Activated CD4-positive, alpha-beta memory T cell treated with anti-CD3 and anti-CD28 coated beads for 36 hours (primary cell): ENCODE measurements at regions of chr2 and their contacts with region 1.

Region 1: DNA sequence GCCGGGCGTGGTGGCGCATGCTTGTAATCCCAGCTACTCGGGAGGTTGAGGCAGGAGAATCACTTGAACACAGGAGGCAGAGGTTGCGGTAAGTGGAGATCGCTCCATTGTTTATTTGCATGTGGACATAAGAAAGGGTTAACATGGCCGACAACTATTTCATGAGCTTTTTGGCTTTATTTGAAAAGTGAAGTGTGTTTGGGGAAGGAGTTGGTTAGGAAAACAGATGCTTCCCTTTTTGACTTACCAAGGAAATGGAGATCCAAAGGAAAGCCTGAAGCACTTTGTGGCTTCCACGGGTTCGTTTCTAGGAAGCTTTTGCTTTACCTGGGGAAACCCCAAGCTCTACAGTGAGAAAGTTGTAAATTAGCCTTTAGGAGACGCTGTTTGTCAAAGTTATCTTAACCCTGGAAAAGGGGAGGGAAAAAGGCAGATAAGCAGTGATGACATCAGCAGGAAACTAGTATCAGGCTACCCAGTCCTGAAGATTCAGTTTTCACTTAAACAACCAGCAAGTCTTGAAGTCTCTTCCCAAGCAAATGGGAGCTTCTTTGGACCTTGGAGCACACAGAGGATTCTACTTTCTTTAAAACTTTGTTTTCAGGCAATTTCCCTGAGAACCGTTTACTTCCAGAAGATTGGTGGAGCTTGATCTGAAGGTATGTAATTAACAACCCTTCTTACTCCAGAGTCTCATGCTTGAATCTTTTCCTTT is at the start of gene CASP10:
- DNase-seq: no peak
- H3K4me3 Mint-ChIP-seq: peak within 1 kb of the TSS; percentile 85
- H3K27ac Mint-ChIP-seq: peak within 1 kb of the TSS; percentile 90
- H3K4me1 Mint-ChIP-seq: peaks cover 58% of the 10 kb centered on the region
- H3K27me3 Mint-ChIP-seq: no peaks in the 10 kb centered on the region
- total RNA-seq, gene CASP10: 15.9 to 16.7 TPM

Region 2: DNA sequence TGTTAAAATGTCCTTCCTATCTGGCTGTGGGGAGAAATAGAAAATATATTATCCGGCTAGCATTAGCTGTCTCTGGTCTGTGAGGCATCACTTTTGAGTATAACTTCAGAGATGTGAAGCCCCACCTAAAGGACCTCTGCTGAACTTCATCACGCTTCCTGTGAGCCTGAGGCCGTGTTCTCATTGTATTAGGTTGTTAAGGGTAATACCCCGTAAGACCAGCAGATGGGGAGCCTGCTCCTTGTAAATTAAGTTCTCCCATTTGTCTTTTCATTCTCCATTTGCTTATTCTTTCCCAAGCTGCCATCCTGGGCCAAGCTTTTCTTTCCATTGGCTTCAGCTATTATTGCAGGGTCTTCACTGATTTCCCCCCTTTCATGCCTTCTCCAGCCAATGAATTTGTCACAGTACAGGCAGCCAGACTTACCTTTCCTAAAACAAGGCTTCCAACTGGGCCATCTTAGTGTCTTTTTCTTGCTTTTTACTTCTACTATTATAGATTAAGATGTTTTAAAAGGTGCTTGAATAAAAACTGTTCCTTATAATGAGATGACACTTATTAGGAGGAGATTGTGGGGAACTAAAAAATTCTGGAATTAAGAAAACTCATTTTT is 281.2 kb before region 1 on chr2:
- CTCF ChIA-PET with region 1: interaction called, 38 read pairs
- POLR2A ChIA-PET with region 1: no interaction called
- intact Hi-C with region 1: no loop called
- DNase-seq: peak; percentile 79
- H3K4me3 Mint-ChIP-seq: no peak overlapping the region
- H3K27ac Mint-ChIP-seq: peak overlapping the region; percentile 69
- H3K4me1 Mint-ChIP-seq: peaks cover 9% of the 10 kb centered on the region
- H3K27me3 Mint-ChIP-seq: no peaks in the 10 kb centered on the region

Region 3: GRCh38 chr2:201118121-201118960 is 64.5 kb before region 1 on chr2:
- CTCF ChIA-PET with region 1: interaction called, 8 read pairs
- POLR2A ChIA-PET with region 1: interaction called, 7 read pairs
- intact Hi-C with region 1: loop called (anchors 2 kb)
- DNase-seq: peak; percentile 93
- H3K4me3 Mint-ChIP-seq: peak overlapping the region; percentile 99
- H3K27ac Mint-ChIP-seq: peak overlapping the region; percentile 97
- H3K4me1 Mint-ChIP-seq: peaks cover 37% of the 10 kb centered on the region
- H3K27me3 Mint-ChIP-seq: no peaks in the 10 kb centered on the region

Region 4: DNA sequence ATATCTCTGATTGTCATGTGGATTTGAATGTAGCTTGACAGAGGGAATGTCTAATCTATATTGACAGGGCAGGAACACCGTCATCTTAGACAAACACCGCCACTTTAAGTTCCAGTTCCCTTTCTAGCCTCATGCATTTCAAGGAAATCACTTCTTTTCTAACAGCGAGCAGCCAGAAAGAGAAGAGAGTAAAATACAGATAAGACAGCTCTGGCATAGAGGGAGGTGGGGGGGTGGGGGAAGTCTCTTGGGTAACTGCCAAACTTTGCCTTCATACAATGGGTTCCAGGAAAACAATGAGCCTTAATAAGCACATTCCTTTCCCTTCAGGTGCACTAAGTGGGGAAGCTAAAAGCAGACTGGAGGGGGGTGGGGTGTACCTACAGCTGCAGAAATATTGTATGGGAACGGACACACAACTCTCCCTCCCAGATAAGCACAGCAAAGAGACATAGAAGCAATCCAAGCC is 37.3 kb after region 1 on chr2:
- CTCF ChIA-PET with region 1: interaction called, 21 read pairs
- POLR2A ChIA-PET with region 1: no interaction called
- intact Hi-C with region 1: no loop called
- DNase-seq: no peak
- H3K4me3 Mint-ChIP-seq: no peak overlapping the region
- H3K27ac Mint-ChIP-seq: no peak overlapping the region
- H3K4me1 Mint-ChIP-seq: peaks cover 45% of the 10 kb centered on the region
- H3K27me3 Mint-ChIP-seq: no peaks in the 10 kb centered on the region

Region 5: DNA sequence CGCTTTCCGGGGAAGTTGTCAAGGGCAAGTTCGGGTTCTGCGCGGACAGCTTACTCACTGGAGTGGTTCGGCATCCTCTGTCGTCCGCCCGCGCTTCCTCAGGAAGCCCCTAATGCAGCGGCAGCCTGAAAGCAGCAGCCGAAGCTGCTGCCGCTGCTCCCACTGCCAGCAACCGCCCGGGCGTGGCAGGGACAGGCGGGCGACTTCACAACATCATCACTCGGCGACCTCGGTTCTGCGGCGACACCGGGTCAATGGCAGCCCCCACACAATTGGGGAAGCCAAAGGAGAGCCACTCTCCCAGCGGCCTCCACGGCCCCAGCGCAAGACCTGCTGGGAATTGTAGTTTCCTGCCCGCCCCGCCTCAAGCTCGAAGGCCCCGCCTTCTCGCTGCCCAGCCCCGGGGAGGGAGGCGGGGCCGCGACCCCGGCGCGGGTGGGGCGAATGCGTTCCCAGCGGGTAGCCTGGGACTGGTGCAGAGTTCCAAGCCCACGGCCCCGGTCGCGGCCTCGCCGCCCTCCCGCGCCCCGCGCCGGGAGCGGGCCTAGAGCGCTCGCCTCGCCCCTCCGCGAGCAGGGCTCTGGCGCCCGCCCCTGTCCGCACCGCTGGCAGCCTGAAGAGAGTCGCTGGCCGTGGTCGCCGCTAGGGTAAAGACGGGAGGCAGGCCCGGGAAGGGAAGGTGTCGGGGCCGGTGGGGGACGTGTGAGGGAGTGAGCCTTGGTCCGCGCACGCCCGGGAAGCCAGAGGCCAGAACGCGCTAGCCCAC is 268.7 kb after region 1 on chr2 and contains the starts of genes STRADB and TRAK2:
- CTCF ChIA-PET with region 1: interaction called, 4 read pairs
- POLR2A ChIA-PET with region 1: no interaction called
- intact Hi-C with region 1: loop called (anchors 5 kb)
- DNase-seq: peak; percentile 98
- H3K4me3 Mint-ChIP-seq: peak within 1 kb of the TSS; percentile 96
- H3K27ac Mint-ChIP-seq: peak within 1 kb of the TSS; percentile 97
- H3K4me1 Mint-ChIP-seq: peaks cover 44% of the 10 kb centered on the region
- H3K27me3 Mint-ChIP-seq: no peaks in the 10 kb centered on the region
- total RNA-seq, gene STRADB: 18.5 to 19.8 TPM
- total RNA-seq, gene TRAK2: 23.5 to 26.0 TPM